ENCODE measurements at regions of chr20 and their contacts with region 1.

Region 1: GRCh38 chr20:8389381-8390036 is 257.4 kb downstream of the PLCB1 start:
- DNase-seq: peak; percentile 59
- ATAC-seq: peak; percentile 27; the same call in 1 of the 2 replicates
- H3K4me3 ChIP-seq: no peak overlapping the region
- H3K27ac ChIP-seq: no peak overlapping the region
- H3K4me1 ChIP-seq: peaks cover 7% of the 10 kb centered on the region
- H3K27me3 ChIP-seq: no peaks in the 10 kb centered on the region
- CTCF ChIP-seq: peak; percentile 51
- POLR2A ChIP-seq: no peak
- RAD21 ChIP-seq: peak; percentile 41

Region 2: DNA sequence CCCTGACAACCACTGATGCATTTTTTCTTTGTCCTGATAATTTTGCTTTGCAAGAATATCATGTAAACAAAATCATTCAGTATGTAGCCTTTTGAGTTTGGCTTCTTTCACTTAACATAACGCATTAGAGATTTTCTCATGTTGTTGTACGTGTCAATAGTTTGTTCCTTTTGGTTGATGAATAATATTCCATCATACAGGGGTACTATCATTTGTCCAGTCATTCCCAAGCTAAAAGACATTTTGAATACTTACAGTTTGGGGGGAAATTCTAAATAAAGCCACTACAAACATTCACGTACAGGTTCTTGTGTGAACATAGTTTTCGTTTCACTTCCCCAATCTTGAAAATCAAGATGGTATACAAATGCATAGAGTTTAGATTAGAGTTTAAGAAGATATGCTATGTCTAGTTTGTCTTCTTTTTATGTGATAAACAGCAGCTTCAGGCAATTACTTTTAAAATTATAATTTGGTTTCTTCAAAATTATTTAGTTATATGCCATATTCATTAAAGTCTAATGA is 454.4 kb before region 1 on chr20:
- CTCF ChIA-PET with region 1: no interaction called
- POLR2A ChIA-PET with region 1: no interaction called
- dilution Hi-C with region 1: no loop called
- in situ Hi-C with region 1: no loop called
- intact Hi-C with region 1: loop called (anchors 10 kb)
- DNase-seq: no peak
- ATAC-seq: no peak
- H3K4me3 ChIP-seq: no peak overlapping the region
- H3K27ac ChIP-seq: no peak overlapping the region
- H3K4me1 ChIP-seq: no peaks in the 10 kb centered on the region
- H3K27me3 ChIP-seq: peaks cover 9% of the 10 kb centered on the region
- CTCF ChIP-seq: no peak
- POLR2A ChIP-seq: no peak
- RAD21 ChIP-seq: no peak

Region 3: GRCh38 chr20:8043687-8044282 is 345.7 kb before region 1 on chr20:
- CTCF ChIA-PET with region 1: no interaction called
- POLR2A ChIA-PET with region 1: no interaction called
- dilution Hi-C with region 1: no loop called
- in situ Hi-C with region 1: no loop called
- intact Hi-C with region 1: loop called (anchors 1 kb)
- DNase-seq: peak; percentile 68
- ATAC-seq: peak; percentile 62
- H3K4me3 ChIP-seq: no peak overlapping the region
- H3K27ac ChIP-seq: no peak overlapping the region
- H3K4me1 ChIP-seq: no peaks in the 10 kb centered on the region
- H3K27me3 ChIP-seq: peaks cover 7% of the 10 kb centered on the region
- CTCF ChIP-seq: peak; percentile 71
- POLR2A ChIP-seq: no peak
- RAD21 ChIP-seq: peak; percentile 73

Region 4: GRCh38 chr20:8049310-8049709 is 340.2 kb before region 1 on chr20:
- CTCF ChIA-PET with region 1: no interaction called
- POLR2A ChIA-PET with region 1: no interaction called
- dilution Hi-C with region 1: no loop called
- in situ Hi-C with region 1: loop called (anchors 10 kb)
- intact Hi-C with region 1: no loop called
- DNase-seq: no peak
- ATAC-seq: no peak
- H3K4me3 ChIP-seq: no peak overlapping the region
- H3K27ac ChIP-seq: no peak overlapping the region
- H3K4me1 ChIP-seq: no peaks in the 10 kb centered on the region
- H3K27me3 ChIP-seq: peaks cover 5% of the 10 kb centered on the region; the same call in 1 of the 2 replicates
- CTCF ChIP-seq: no peak
- POLR2A ChIP-seq: no peak
- RAD21 ChIP-seq: no peak

Region 5: GRCh38 chr20:8144282-8145245 is 244.9 kb before region 1 on chr20:
- CTCF ChIA-PET with region 1: no interaction called
- POLR2A ChIA-PET with region 1: no interaction called
- dilution Hi-C with region 1: no loop called
- in situ Hi-C with region 1: loop called (anchors 5 kb)
- intact Hi-C with region 1: no loop called
- DNase-seq: peak; percentile 89
- ATAC-seq: peak; percentile 77
- H3K4me3 ChIP-seq: no peak overlapping the region
- H3K27ac ChIP-seq: no peak overlapping the region
- H3K4me1 ChIP-seq: peaks cover 5% of the 10 kb centered on the region; the same call in 1 of the 2 replicates
- H3K27me3 ChIP-seq: no peaks in the 10 kb centered on the region; the same call in 1 of the 2 replicates
- CTCF ChIP-seq: no peak
- POLR2A ChIP-seq: no peak
- RAD21 ChIP-seq: no peak

Region 6: DNA sequence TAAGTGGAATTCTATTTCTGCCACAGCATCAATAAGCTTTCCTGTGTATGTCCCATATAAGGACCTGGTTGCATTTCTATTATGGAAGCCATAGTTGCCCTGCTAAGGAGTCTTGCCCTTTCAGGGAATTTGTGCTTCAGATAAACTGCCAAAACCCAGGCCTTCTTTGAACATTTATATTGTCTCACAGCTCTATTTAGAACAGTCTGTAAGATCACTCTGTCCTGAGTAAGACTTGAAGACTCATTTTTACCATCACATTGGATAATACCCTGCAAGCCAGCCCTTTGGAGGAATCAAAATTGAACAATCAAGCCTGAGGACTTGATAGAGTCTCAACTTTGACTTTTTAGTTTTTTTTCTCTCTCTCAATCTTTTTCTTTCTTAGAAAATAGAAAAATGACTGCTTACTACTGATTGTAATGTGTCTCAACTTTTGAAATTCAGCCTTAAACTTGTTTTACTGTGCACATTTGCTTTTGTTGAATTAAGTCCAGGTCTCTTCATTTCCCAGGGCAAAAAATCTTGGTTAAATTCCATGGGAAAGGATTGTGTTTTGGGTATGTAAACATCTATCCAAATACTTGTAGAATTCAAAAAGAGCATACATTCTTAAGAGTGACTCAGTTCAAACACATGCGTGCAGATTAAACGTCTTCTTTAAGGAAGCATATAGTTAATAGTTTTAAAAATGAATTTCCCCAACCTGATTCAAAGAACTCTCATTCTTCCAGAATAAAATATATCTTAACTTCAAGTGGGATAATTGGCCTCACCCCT is 166.2 kb before region 1 on chr20:
- CTCF ChIA-PET with region 1: no interaction called
- POLR2A ChIA-PET with region 1: no interaction called
- dilution Hi-C with region 1: no loop called
- in situ Hi-C with region 1: no loop called
- intact Hi-C with region 1: loop called (anchors 5 kb)
- DNase-seq: peak; percentile 94
- ATAC-seq: peak; percentile 86
- H3K4me3 ChIP-seq: no peak overlapping the region
- H3K27ac ChIP-seq: peak overlapping the region; percentile 59
- H3K4me1 ChIP-seq: peaks cover 8% of the 10 kb centered on the region
- H3K27me3 ChIP-seq: no peaks in the 10 kb centered on the region
- CTCF ChIP-seq: no peak
- POLR2A ChIP-seq: no peak
- RAD21 ChIP-seq: no peak